Activated CD4-positive, alpha-beta T cell treated with anti-CD3 and anti-CD28 coated beads, Interleukin-2, amount 10 ng/mL, durations not matched to agents 24 days and 14 days (primary cell): ENCODE measurements at regions of chr2 and their contacts with region 1.

Region 1: DNA sequence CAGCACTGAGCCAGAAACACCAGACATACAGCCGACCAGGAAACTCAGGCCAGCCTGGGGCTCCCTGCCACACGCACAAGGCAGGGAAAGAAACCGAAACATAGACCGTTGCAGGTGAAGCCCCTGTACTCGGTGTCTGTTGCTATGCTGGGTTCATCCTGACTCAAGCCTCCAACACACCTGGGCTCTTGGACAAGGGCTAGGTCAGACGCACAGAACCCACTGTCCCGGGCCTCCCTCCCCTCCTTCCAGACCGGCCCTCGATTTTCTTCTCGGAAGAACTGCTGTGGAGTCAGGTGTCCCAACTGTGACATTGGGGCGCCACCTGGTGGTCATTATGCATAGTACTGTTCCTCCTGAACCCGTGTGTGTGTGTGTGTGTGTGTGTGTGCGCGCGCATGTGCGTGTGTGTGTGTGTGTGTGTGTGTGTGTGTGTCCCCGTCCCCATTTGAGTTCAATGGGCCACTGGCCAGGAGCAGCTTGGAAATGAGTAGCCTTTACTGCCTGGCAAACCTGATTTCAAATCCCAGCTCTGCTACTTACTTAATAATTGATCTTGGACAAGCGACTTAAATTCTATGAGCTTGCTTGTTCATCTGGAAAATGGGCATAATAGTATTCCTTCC is 55.4 kb upstream of the GLI2 start:
- DNase-seq: peak; percentile 90
- H3K4me3 Mint-ChIP-seq: no peak overlapping the region
- H3K27ac Mint-ChIP-seq: no peak overlapping the region
- H3K4me1 Mint-ChIP-seq: peaks cover 4% of the 10 kb centered on the region
- H3K27me3 Mint-ChIP-seq: peaks cover 23% of the 10 kb centered on the region

Region 2: DNA sequence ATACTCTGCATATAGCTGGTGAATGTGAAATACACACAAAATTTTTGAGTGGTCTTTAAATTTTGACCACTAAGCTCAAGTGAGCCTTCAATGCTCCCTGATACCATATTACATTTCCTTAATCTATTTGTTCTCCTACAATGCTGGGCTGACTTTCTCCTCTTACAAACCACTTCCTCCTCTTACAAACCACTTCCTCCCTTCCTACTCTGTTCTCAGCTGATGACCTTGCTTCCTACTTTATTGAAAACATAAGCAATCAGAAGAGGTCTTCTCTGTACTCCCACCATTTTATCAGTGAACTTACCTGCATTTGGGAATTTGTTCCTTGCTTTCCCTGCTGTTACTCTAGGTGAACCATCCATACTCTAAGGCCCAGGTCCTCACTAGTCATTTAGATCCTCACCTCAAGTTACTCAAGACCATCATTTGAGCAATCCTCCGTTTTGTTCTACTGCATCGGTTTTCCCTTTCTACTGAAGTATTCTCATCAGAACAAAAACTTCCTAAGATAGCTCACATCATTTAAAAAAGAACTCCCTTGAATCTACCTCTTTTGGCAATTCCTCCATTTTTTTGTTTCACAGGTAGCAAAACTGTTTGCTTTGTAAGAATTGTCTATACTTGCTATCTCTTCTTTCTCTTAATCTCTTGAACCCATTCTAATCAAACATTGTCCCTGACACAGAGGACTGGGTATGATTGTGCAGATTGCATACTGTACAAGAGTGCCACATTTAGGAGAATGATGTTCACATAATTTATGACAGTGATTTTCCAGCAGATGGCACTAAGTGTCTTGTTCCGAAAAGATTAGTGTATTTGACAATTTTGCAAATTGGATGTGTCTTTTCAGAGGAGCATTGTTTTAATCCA is 570.8 kb before region 1 on chr2:
- intact Hi-C with region 1: loop called (anchors 2 kb)
- DNase-seq: peak; percentile 76
- H3K4me3 Mint-ChIP-seq: peak overlapping the region; percentile 58
- H3K27ac Mint-ChIP-seq: peak overlapping the region; percentile 22
- H3K4me1 Mint-ChIP-seq: peaks cover 21% of the 10 kb centered on the region
- H3K27me3 Mint-ChIP-seq: peaks cover 26% of the 10 kb centered on the region

Region 3: GRCh38 chr2:120589771-120590608 is 90.3 kb before region 1 on chr2:
- intact Hi-C with region 1: no loop called
- DNase-seq: no peak
- H3K4me3 Mint-ChIP-seq: no peak overlapping the region
- H3K27ac Mint-ChIP-seq: no peak overlapping the region
- H3K4me1 Mint-ChIP-seq: peaks cover 1% of the 10 kb centered on the region
- H3K27me3 Mint-ChIP-seq: peaks cover 38% of the 10 kb centered on the region

Region 4: DNA sequence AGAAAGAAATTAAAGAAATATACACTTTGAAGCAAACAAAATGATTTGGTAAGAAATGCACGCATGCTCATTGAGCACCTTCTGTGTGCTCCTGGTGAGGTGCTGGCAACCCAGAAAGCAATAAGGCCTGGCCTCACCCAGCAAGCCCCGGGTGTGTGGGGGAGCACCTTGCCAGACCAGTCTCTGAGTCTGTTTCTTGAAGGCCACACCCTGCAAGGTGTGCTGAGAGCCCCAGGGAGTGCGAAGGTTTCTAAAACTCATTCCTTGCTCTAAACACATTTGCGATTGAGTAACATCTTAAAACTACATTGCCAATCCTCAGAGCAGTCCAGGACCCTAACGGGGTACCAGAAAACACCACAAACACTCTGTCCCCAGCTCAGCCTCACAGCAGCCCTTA is 471.5 kb after region 1 on chr2:
- intact Hi-C with region 1: no loop called
- DNase-seq: no peak
- H3K4me3 Mint-ChIP-seq: no peak overlapping the region
- H3K27ac Mint-ChIP-seq: no peak overlapping the region
- H3K4me1 Mint-ChIP-seq: no peaks in the 10 kb centered on the region
- H3K27me3 Mint-ChIP-seq: peaks cover 3% of the 10 kb centered on the region